ENCODE measurements at regions of chr7 and their contacts with region 1.

Region 1: DNA sequence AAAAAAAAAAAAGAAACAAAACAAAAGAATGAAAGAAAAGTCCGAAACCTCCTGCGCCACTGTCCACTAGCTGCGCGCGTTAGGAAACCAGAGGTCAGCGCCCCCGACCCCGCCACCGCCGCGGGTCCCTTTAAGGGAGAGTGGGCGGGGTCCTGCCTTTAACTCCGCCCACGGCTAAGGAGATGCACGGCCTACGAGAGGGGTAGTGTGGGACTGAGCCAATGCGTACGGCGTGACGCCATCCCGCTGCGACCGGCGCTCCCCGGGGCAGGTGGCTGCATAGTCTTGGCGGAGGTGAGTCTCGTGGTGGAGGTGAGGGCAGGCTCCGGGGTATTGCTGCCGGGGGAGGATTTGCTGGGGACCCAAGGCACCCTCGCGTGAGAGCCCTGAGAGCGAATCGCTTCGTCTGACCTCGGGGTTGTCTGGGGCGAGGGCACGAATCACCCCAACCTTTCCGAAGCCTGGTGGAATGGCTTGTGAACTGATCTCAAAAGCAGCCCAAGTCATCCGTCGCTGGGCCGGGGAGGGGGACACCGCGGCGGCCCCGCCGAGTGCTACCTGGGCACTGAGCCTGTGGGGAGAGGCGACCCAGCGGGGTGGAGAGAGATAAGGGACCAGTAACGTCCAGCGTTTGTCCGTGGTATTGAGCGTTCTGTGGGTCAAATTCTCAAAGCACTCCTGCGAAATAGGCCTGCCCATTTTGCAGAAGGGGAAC is at the start of gene MRPS17:
- DNase-seq: peak; percentile 79
- ATAC-seq: peak; percentile 100
- H3K4me3 ChIP-seq: peak within 1 kb of the TSS; percentile 70
- H3K27ac ChIP-seq: peak within 1 kb of the TSS; percentile 10
- H3K4me1 ChIP-seq: no peaks in the 10 kb centered on the region
- H3K27me3 ChIP-seq: no peaks in the 10 kb centered on the region
- CTCF ChIP-seq: no peak
- POLR2A ChIP-seq: peak; percentile 56
- RAD21 ChIP-seq: no peak
- total RNA-seq, gene MRPS17: 15.2 and 21.1 TPM in 2 replicates

Region 2: DNA sequence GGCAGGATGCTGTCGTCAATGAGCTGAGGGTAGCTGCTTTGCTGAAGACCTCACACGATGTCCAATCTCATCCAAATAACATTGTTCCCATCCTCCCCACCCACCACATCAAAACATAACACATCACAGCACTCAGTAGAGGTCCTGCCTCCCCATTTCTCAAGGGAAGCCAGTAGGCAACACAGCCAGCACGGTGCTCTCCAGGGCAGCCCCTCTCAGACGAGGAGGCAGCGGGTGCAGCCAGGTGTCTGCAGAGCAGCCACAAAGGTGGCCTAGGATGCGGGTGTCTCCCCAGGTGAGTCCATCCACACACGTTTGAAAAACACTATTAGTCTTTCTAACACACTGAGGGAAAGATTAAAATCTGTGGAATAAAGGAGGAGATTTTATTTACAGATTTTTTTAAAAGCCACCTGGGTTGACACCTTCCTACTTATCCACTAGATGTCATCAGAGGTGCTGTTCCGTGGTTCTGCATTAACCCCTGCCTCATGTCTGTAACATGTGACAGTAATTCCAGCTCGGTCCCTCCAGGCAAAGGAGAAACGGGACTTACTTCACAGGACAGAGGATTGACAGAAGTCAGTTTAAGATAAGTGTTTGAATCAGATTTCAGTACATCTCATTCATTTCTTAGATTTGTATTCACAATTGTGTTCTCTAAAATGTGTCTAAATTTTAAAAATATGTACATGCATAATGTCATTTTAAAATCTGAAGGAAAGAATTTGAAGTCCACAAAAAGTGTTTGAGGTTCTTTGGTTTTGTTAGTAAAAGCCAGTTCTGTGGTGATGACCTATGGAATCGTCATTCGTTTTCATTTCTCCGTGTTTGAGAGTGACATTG is 518.6 kb before region 1 on chr7:
- CTCF ChIA-PET with region 1: no interaction called
- POLR2A ChIA-PET with region 1: no interaction called
- dilution Hi-C with region 1: no loop called
- in situ Hi-C with region 1: loop called (anchors 25 kb)
- intact Hi-C with region 1: no loop called
- DNase-seq: peak; percentile 59
- ATAC-seq: peak; percentile 70
- H3K4me3 ChIP-seq: no peak overlapping the region
- H3K27ac ChIP-seq: no peak overlapping the region
- H3K4me1 ChIP-seq: peaks cover 4% of the 10 kb centered on the region; the same call in 1 of the 2 replicates
- H3K27me3 ChIP-seq: no peaks in the 10 kb centered on the region
- CTCF ChIP-seq: peak; percentile 63
- POLR2A ChIP-seq: no peak
- RAD21 ChIP-seq: peak; percentile 71

Region 3: DNA sequence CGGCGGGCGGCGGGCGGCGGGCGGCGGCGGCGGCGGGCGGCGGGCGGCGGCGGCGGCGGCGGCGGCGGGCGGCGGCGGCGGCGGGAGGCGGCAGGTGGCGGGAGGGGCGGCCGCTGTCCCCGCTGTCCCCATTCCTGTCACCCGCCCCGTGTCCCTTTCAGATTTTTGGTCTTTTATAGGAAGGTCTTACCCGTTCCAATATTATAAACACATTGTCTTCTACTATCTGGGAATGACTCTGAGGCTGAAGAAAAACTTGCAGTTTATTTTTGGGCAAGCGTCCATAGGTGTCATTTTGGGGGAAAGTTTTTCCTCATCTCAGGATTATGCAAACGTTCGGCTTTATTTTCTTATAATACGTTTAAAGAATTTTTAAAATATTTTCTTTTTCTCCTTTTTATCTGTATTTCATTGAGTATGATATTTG is 64.0 kb before region 1 on chr7:
- CTCF ChIA-PET with region 1: no interaction called
- POLR2A ChIA-PET with region 1: no interaction called
- dilution Hi-C with region 1: no loop called
- in situ Hi-C with region 1: no loop called
- intact Hi-C with region 1: loop called (anchors 5 kb)
- DNase-seq: no peak
- ATAC-seq: no peak
- H3K4me3 ChIP-seq: peak overlapping the region; percentile 66
- H3K27ac ChIP-seq: no peak overlapping the region
- H3K4me1 ChIP-seq: no peaks in the 10 kb centered on the region
- H3K27me3 ChIP-seq: no peaks in the 10 kb centered on the region
- CTCF ChIP-seq: no peak
- POLR2A ChIP-seq: no peak
- RAD21 ChIP-seq: no peak

Measured in IMR-90 (cell line).